Endothelial cell of umbilical vein (primary cell): ENCODE measurements at regions of chr17 and their contacts with region 1.

Region 1: GRCh38 chr17:57255776-57256681 is at the start of gene MSI2:
- DNase-seq: peak; percentile 59
- H3K4me3 ChIP-seq: peak within 1 kb of the TSS; percentile 85 to 99 (median 97)
- H3K27ac ChIP-seq: peak within 1 kb of the TSS; percentile 21
- H3K4me1 ChIP-seq: peaks cover 12% of the 10 kb centered on the region
- H3K27me3 ChIP-seq: peaks cover 0 to 2% of the 10 kb centered on the region in 2 experiments
- CTCF ChIP-seq: no peak
- POLR2A ChIP-seq: no peak
- total RNA-seq, gene MSI2: 59.3 and 62.7 TPM in 2 replicates

Region 2: GRCh38 chr17:57232268-57232667 is 23.8 kb before region 1 on chr17:
- CTCF ChIA-PET with region 1: no interaction called
- POLR2A ChIA-PET with region 1: no interaction called
- dilution Hi-C with region 1: no loop called
- intact Hi-C with region 1: no loop called
- DNase-seq: no peak
- H3K4me3 ChIP-seq: no peak overlapping the region
- H3K27ac ChIP-seq: no peak overlapping the region
- H3K4me1 ChIP-seq: peaks cover 2% of the 10 kb centered on the region
- H3K27me3 ChIP-seq: peaks cover 0 to 10% of the 10 kb centered on the region in 2 experiments
- CTCF ChIP-seq: no peak
- POLR2A ChIP-seq: no peak

Region 3: GRCh38 chr17:57357399-57357807 is 101.4 kb after region 1 on chr17:
- CTCF ChIA-PET with region 1: interaction called, 3 read pairs
- POLR2A ChIA-PET with region 1: no interaction called
- dilution Hi-C with region 1: no loop called
- intact Hi-C with region 1: loop called (anchors 5 kb)
- DNase-seq: no peak
- H3K4me3 ChIP-seq: peak overlapping the region in 1 of 3 experiments; percentile 35
- H3K27ac ChIP-seq: no peak overlapping the region
- H3K4me1 ChIP-seq: peaks cover 5% of the 10 kb centered on the region
- H3K27me3 ChIP-seq: no peaks in the 10 kb centered on the region
- CTCF ChIP-seq: no peak
- POLR2A ChIP-seq: no peak

Region 4: GRCh38 chr17:57422574-57423164 is 166.6 kb after region 1 on chr17:
- CTCF ChIA-PET with region 1: interaction called, 4 read pairs
- POLR2A ChIA-PET with region 1: no interaction called
- dilution Hi-C with region 1: no loop called
- intact Hi-C with region 1: loop called (anchors 1 kb)
- DNase-seq: no peak
- H3K4me3 ChIP-seq: no peak overlapping the region
- H3K27ac ChIP-seq: no peak overlapping the region
- H3K4me1 ChIP-seq: peaks cover 23% of the 10 kb centered on the region
- H3K27me3 ChIP-seq: no peaks in the 10 kb centered on the region
- CTCF ChIP-seq: no peak
- POLR2A ChIP-seq: no peak

Region 5: GRCh38 chr17:57597531-57598453 is 341.8 kb after region 1 on chr17:
- CTCF ChIA-PET with region 1: no interaction called
- POLR2A ChIA-PET with region 1: no interaction called
- dilution Hi-C with region 1: no loop called
- intact Hi-C with region 1: loop called (anchors 5 kb)
- DNase-seq: peak; percentile 67
- H3K4me3 ChIP-seq: no peak overlapping the region
- H3K27ac ChIP-seq: no peak overlapping the region
- H3K4me1 ChIP-seq: no peaks in the 10 kb centered on the region
- H3K27me3 ChIP-seq: peaks cover 7 to 9% of the 10 kb centered on the region in 2 experiments
- CTCF ChIP-seq: peak; percentile 78 to 79
- POLR2A ChIP-seq: no peak